Ascending aorta (tissue), 2 donors: ENCODE measurements at regions of chr7 and their contacts with region 1.

Region 1: GRCh38 chr7:65373608-65374351 is at the start of gene ZNF92:
- DNase-seq: peak; percentile 93 to 98
- H3K4me3 ChIP-seq: peak within 1 kb of the TSS; percentile 70 to 94
- H3K27ac ChIP-seq: peak within 1 kb of the TSS; percentile 86 to 91
- H3K4me1 ChIP-seq: peaks cover 0 to 14% of the 10 kb centered on the region in 2 donors
- H3K27me3 ChIP-seq: no peaks in the 10 kb centered on the region
- CTCF ChIP-seq: no peak
- total RNA-seq, gene ZNF92: 4.0 TPM

Region 2: DNA sequence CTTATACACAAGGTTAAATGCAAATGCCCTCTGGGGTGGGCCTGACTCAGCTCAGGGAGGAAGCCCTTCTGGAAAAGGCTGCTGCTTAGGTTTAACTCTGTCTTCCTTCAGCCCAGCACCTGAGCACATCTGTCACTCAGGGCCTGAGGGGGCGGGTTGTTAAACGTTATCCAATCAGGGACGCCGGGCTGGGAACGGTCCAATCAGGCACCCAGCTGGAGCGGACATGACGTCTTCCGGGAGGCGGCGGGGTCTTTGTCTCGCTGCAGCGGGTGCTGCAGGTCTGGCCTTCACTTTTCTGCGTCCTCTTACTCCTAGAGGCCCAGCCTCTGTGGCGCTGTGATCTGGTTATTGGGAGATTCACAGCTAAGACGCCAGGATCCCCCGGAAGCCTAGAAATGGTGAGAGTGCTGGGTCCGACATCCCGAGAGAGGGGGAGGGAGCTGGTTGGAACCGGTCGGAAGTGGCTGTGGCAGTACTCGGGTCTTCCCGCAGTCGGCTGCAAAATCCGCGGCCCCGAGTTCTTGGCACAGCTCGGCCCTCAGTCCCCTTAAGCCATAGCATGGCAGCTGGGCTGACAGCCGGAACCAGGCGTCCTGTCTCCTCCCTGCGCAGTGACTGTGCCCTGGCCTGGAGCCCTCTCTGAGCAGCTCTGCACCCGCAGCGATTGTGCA is 579.5 kb before region 1 on chr7 and contains the start of gene ZNF138:
- intact Hi-C with region 1: loop called (anchors 5 kb)
- DNase-seq: peak; percentile 88 to 98
- H3K4me3 ChIP-seq: peak within 1 kb of the TSS; percentile 78 to 97
- H3K27ac ChIP-seq: peak within 1 kb of the TSS; percentile 77 to 78
- H3K4me1 ChIP-seq: peaks cover 0 to 4% of the 10 kb centered on the region in 2 donors
- H3K27me3 ChIP-seq: no peaks in the 10 kb centered on the region
- CTCF ChIP-seq: no peak
- total RNA-seq, gene ZNF138: 2.0 TPM

Region 3: DNA sequence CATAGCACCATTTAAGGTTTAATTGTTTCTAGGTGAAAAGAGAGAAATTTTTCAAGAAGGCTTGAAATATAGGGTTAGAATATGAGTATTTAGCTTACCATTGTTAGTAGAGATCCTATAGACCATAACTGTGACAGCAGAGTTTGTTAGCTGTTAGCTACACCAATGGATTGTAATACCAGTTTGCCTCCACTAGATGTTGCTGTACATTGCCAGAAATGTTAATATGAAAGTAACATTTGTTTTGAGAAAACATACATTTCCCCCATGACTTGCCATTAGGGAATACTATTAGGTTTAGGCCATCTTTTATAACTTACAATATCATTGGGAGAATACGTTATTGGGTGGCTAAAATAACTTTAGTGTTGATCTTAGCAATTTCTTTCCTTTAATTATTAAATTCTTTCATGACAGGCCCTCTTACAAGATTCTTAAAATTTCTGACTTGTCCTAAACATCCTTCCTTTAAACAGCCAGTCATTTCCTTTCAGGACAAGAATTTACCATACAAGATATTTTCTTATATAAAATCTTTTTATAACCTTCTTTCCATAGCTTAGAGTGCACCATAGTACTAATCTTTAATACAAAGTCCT is 422.4 kb before region 1 on chr7:
- intact Hi-C with region 1: loop called (anchors 10 kb)
- DNase-seq: no peak
- H3K4me3 ChIP-seq: no peak overlapping the region
- H3K27ac ChIP-seq: peak overlapping the region in 1 of 2 donors; percentile 29
- H3K4me1 ChIP-seq: peaks cover 0 to 9% of the 10 kb centered on the region in 2 donors
- H3K27me3 ChIP-seq: no peaks in the 10 kb centered on the region
- CTCF ChIP-seq: peak; percentile 71 to 90 (median 77)

Region 4: DNA sequence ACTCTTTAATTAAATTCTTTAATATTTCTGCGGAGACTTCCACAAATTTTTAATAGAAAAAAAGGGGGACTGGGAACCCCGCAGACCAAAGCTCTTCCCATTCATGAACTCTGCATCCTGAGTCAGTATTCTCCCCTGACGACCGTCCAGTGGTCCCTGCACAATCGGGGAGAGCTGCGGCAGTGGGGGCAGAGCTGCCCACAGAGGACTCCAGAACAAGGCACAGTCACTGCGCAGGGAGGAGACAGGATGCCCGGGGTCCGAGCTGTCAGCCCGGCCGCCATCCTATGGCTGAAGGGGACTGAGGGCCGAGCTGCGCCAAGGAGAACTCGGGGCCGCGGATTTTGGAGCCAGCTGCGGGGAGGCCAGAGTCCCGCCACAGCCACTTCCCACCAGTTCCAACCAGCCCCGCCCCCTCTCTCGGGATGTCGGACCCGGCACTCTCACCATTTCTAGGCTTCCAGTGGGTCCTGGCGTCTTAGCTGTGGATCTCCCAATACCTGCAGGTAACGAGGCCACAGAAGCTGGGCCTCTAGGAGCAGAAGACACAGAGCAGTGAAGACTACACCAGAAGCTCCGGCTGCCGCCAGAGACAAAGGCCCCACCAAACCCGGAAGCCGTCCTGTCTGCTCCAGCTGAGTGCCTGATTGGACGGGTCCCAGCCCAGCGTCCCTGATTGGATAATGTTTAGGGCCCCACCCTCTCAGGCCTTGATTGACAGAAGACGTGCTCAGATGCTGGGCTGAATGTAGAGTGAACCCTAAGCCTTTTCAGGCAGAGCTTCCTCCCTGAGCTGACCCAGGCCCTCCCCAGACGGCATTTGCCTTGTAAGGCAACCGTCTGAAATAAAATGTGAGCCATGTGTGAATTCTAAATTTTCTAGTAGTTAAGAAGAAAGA is 367.4 kb before region 1 on chr7 and contains the start of gene ERV3-1:
- intact Hi-C with region 1: loop called (anchors 1 kb)
- DNase-seq: peak; percentile 92 to 98
- H3K4me3 ChIP-seq: peak within 1 kb of the TSS; percentile 85 to 87
- H3K27ac ChIP-seq: peak within 1 kb of the TSS; percentile 80 to 90
- H3K4me1 ChIP-seq: peaks cover 4 to 24% of the 10 kb centered on the region in 2 donors
- H3K27me3 ChIP-seq: no peaks in the 10 kb centered on the region
- CTCF ChIP-seq: no peak
- total RNA-seq, gene ERV3-1: 9.5 TPM